Activated naive CD4-positive, alpha-beta T cell treated with anti-CD3 and anti-CD28 coated beads for 36 hours (primary cell): ENCODE measurements at regions of chr6 and their contacts with region 1.

Region 1: DNA sequence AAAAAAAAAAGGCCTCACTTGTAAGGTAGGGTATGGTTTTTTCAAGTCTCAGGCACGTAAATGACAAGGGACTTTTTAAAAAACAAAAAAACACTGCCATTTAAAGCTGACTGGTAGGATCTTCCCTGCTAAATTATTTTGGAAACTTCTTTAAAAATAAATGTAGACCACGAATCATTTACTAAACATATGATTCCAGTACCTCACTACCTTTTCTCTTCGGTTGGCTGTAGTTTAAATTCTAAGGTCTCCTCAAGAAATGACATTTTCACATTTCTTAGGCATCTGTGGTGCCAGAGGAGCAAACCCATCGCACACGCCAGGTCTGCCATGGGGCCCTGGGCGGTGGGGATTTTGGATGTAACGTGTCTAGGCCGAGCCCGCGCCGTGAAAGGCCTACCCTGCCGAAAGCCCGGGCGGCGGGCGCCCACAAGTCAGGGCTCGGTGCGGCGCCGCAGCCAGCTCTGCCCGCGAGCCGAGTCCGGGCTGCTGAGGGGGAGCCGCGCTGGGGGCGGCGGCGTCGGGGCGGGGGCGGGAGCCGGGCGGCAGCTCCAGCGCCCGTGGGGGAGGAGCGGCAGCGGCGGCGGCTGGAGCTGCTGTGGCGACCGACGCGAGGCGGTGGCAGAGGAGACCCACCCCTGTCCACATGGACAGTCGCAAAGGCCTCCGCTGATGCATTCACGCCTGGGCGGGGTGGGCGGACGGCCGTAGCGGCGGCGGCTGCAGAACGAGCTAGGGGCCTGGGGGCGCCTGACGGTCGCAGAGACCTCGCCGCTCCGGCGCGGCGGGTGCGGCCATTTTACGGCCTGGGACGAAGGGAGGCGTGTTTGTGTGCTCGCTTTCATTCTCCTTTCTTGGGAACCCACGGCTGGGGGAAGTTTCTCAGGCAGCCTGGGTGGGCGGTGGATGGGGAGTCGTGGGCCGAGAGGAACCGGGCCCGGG is at the start of gene SENP6:
- DNase-seq: peak; percentile 68
- H3K4me3 Mint-ChIP-seq: peak within 1 kb of the TSS; percentile 95
- H3K27ac Mint-ChIP-seq: peak within 1 kb of the TSS; percentile 99
- H3K4me1 Mint-ChIP-seq: peaks cover 55% of the 10 kb centered on the region
- H3K27me3 Mint-ChIP-seq: no peaks in the 10 kb centered on the region
- total RNA-seq, gene SENP6: 54.0 to 57.7 TPM

Region 2: GRCh38 chr6:75611702-75612375 is 10.3 kb after region 1 on chr6:
- CTCF ChIA-PET with region 1: interaction called, 4 read pairs
- intact Hi-C with region 1: loop called (anchors 1 kb)
- DNase-seq: peak; percentile 61
- H3K4me3 Mint-ChIP-seq: no peak overlapping the region
- H3K27ac Mint-ChIP-seq: peak overlapping the region; percentile 50
- H3K4me1 Mint-ChIP-seq: peaks cover 91% of the 10 kb centered on the region
- H3K27me3 Mint-ChIP-seq: no peaks in the 10 kb centered on the region

Region 3: GRCh38 chr6:75723382-75723781 is 121.8 kb after region 1 on chr6:
- CTCF ChIA-PET with region 1: no interaction called
- intact Hi-C with region 1: no loop called
- DNase-seq: no peak
- H3K4me3 Mint-ChIP-seq: no peak overlapping the region
- H3K27ac Mint-ChIP-seq: no peak overlapping the region
- H3K4me1 Mint-ChIP-seq: no peaks in the 10 kb centered on the region
- H3K27me3 Mint-ChIP-seq: no peaks in the 10 kb centered on the region

Region 4: GRCh38 chr6:75748743-75749501 is 147.3 kb after region 1 on chr6 and contains the start of gene MYO6:
- CTCF ChIA-PET with region 1: no interaction called
- intact Hi-C with region 1: loop called (anchors 2 kb)
- DNase-seq: peak; percentile 27
- H3K4me3 Mint-ChIP-seq: peak within 1 kb of the TSS; percentile 85
- H3K27ac Mint-ChIP-seq: no peak within 1 kb of the TSS
- H3K4me1 Mint-ChIP-seq: peaks cover 6% of the 10 kb centered on the region
- H3K27me3 Mint-ChIP-seq: peaks cover 36% of the 10 kb centered on the region
- total RNA-seq, gene MYO6: 1.8 to 2.0 TPM